CD4-positive, alpha-beta memory T cell (primary cell): ENCODE measurements at regions of chr12 and their contacts with region 1.

Region 1: GRCh38 chr12:93502802-93503623 is 35.7 kb downstream of the MRPL42 start:
- DNase-seq: peak; percentile 53 to 65 (median 60)
- H3K4me3 ChIP-seq: no peak overlapping the region
- H3K4me3 Mint-ChIP-seq: no peak overlapping the region
- H3K27ac ChIP-seq: no peak overlapping the region
- H3K27ac Mint-ChIP-seq: peak overlapping the region in 2 of 7 donors; percentile 5 to 66
- H3K4me1 ChIP-seq: no peaks in the 10 kb centered on the region
- H3K4me1 Mint-ChIP-seq: peaks cover 0 to 6% (median 3%) of the 10 kb centered on the region in 4 donors
- H3K27me3 ChIP-seq: no peaks in the 10 kb centered on the region
- H3K27me3 Mint-ChIP-seq: no peaks in the 10 kb centered on the region

Region 2: DNA sequence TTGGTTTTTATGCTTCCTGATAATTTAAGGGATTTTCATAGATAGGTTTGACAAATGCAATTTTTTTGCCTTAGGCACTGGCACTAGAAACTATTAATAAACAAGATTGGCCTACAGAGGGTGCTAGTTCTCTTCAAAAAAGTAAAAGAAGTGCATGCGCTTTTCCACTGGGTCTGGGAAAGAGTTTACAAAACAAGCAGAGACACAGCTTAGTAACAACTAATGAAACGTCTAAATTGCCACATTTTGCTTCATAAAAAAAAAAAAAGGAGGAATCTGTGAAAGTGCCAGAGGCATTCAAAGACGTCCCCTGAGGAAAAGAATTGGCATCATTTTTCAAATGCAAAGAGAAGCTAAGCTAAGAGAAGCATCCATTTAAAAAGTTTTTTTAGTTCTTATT is 515.7 kb before region 1 on chr12:
- CTCF ChIA-PET with region 1: interaction called, 8 read pairs
- POLR2A ChIA-PET with region 1: no interaction called
- intact Hi-C with region 1: loop called (anchors 1 kb)
- DNase-seq: peak in 4 of 5 donors; percentile 52 to 61 (median 57)
- H3K4me3 ChIP-seq: no peak overlapping the region
- H3K4me3 Mint-ChIP-seq: peak overlapping the region in 3 of 8 donors; percentile 27 to 33 (median 30)
- H3K27ac ChIP-seq: no peak overlapping the region
- H3K27ac Mint-ChIP-seq: peak overlapping the region in 1 of 7 donors; percentile 9
- H3K4me1 ChIP-seq: peaks cover 7% of the 10 kb centered on the region
- H3K4me1 Mint-ChIP-seq: peaks cover 8 to 11% (median 9%) of the 10 kb centered on the region in 4 donors
- H3K27me3 ChIP-seq: no peaks in the 10 kb centered on the region
- H3K27me3 Mint-ChIP-seq: no peaks in the 10 kb centered on the region

Region 3: DNA sequence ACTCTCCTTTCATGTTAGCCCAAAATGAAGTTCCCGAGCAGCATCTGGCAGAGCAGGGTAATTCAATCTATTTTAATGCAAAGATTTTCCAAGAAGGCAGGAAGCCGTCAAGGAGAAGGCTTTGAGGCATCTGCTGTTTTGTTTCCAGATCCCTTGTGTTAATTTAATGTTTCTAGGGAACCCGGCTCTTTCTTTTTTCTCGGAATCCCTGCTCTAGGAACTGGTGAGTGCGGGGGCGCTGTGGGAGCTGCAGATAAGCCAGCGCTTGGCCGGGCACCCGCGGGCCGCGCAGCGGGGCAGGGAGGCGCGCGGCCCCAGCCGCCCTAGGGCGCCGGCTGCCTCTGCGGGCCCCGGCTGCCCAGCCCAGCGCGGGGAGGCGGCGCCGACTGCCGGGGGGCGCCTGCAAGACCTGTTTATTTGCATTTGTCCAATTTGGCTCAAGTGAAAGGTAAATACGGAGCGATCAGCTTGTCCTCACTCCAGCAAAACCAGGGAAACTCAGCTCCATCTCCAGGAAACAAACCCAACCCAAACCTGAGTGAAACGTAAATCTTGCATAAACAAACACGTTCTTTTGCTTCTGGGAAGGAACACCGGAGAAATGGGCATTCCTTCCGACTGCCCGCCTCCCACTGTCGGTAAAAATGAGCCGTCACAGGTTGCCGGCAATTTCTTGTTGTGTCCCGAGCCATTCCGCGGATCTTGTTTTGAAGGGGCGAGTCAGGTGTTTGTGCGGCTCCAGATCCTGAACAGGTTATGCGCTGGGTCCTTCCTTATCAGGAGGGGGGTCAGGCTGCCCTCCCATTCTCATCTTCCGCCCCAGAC is 239.3 kb after region 1 on chr12:
- CTCF ChIA-PET with region 1: interaction called, 12 read pairs
- POLR2A ChIA-PET with region 1: no interaction called
- intact Hi-C with region 1: loop called (anchors 1 kb)
- DNase-seq: peak; percentile 40 to 58 (median 50)
- H3K4me3 ChIP-seq: peak overlapping the region; percentile 60 to 72
- H3K4me3 Mint-ChIP-seq: peak overlapping the region; percentile 91 to 98 (median 94)
- H3K27ac ChIP-seq: peak overlapping the region; percentile 63
- H3K27ac Mint-ChIP-seq: peak overlapping the region; percentile 87 to 95 (median 94)
- H3K4me1 ChIP-seq: peaks cover 25% of the 10 kb centered on the region
- H3K4me1 Mint-ChIP-seq: peaks cover 9 to 40% (median 21%) of the 10 kb centered on the region in 4 donors
- H3K27me3 ChIP-seq: no peaks in the 10 kb centered on the region
- H3K27me3 Mint-ChIP-seq: no peaks in the 10 kb centered on the region

Region 4: GRCh38 chr12:93979189-93979588 is 476.2 kb after region 1 on chr12:
- CTCF ChIA-PET with region 1: interaction called, 6 read pairs
- POLR2A ChIA-PET with region 1: no interaction called
- intact Hi-C with region 1: loop called (anchors 2 kb)
- DNase-seq: peak in 4 of 5 donors; percentile 20 to 45 (median 28)
- H3K4me3 ChIP-seq: no peak overlapping the region
- H3K4me3 Mint-ChIP-seq: no peak overlapping the region
- H3K27ac ChIP-seq: no peak overlapping the region
- H3K27ac Mint-ChIP-seq: peak overlapping the region in 1 of 7 donors; percentile 24
- H3K4me1 ChIP-seq: no peaks in the 10 kb centered on the region
- H3K4me1 Mint-ChIP-seq: peaks cover 0 to 12% (median 7%) of the 10 kb centered on the region in 4 donors
- H3K27me3 ChIP-seq: no peaks in the 10 kb centered on the region
- H3K27me3 Mint-ChIP-seq: no peaks in the 10 kb centered on the region

Region 5: DNA sequence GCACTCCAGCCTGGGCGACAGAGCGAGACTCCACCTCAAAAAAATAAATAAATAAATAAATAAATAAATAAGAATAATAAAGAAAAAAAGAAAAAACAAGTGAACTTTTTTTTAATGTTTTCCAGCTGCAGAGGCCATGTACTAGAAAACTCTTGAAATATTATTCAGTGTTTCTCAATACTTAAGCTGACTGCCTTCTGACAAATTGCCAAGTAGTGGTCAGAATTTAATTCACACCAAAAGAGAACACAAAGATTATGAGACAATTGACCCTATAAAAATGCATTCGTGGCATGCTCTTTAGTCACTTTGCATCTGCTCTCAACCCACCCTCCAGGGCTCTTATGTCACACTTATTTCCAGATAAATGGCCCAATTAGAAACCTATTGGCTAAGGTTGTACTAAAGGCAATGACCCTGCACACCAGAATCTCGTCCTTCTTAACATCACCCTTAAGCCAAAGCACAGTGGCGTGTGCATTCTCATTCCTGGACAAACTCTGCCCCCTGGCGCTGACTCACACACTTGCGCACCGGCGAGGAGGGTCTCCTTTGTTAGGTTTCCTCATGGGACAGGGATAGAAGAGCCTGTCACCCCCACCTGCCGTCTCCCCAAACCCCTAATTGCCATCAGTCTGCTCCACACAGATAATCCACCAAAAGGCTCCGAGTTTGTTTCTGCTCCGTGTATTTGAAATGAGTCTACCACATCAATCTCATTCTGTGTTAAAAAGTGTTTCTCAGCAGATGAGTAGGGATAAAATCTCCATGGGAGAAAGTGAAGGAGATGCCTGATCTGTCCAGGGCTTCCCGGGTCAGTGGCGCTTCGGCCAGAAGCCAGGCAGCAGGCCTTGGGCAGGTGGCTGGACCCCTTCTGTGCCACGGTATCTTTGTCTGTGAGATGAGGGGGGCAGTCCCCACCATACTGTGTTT is 1029.7 kb after region 1 on chr12:
- CTCF ChIA-PET with region 1: no interaction called
- POLR2A ChIA-PET with region 1: no interaction called
- intact Hi-C with region 1: loop called (anchors 2 kb)
- DNase-seq: peak; percentile 48 to 64 (median 56)
- H3K4me3 ChIP-seq: no peak overlapping the region
- H3K4me3 Mint-ChIP-seq: no peak overlapping the region
- H3K27ac ChIP-seq: no peak overlapping the region
- H3K27ac Mint-ChIP-seq: no peak overlapping the region
- H3K4me1 ChIP-seq: no peaks in the 10 kb centered on the region
- H3K4me1 Mint-ChIP-seq: peaks cover 0 to 5% (median 3%) of the 10 kb centered on the region in 4 donors
- H3K27me3 ChIP-seq: no peaks in the 10 kb centered on the region
- H3K27me3 Mint-ChIP-seq: peaks cover 2 to 18% of the 10 kb centered on the region in 2 donors